ENCODE measurements at regions of chr15 and their contacts with region 1.

Region 1: DNA sequence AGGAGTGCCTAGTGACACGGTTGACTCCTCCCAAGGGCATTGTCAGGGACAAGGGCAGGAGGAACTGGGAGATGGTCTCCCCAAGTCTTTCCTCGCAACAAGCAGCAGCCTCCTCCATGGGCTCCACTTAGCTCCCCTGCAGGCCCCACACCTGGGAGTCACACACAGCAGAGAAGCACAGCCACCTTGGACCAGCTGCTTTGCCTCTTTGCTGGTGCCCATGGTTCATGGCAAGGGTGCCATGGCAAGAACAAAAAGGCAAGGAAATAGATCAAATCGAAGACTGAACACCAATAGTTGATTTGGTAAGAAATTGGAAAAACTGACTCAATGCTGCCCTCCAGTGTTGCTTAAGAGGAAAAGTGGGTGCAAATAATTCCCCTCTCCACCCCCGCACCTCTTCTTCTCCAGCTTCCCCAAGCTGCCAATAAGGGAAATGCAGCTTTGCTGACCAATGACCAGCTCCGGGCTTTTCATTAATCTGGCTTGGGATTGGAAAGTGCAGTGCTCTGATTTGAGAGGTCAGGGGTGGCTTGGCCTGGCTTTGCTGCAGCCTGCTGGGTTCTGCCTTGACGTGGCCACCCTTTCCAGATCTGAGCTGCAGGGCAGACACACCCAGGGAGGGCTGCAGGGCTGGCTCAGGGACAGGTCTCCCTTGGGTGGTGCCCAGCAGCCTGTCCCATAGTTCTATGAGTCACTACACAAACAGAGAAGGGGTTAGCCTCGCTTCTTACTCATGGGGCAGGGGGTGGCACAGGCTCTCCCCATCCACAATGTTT is 162.0 kb downstream of the KLF13 start:
- DNase-seq: peak; percentile 80
- ATAC-seq: peak; percentile 93
- H3K4me3 ChIP-seq: 0 out of 4 replicates have a peak overlapping the region, but pooled peaks of 1 of the 2 experiments have one; percentile 9
- H3K27ac ChIP-seq: peak overlapping the region; percentile 47; the same call in 1 of the 2 replicates
- H3K4me1 ChIP-seq: peaks cover 19 to 21% of the 10 kb centered on the region in 2 experiments
- H3K27me3 ChIP-seq: no peaks in the 10 kb centered on the region
- CTCF ChIP-seq: peak; percentile 78 to 90 (median 84)
- POLR2A ChIP-seq: no peak
- RAD21 ChIP-seq: peak; percentile 77

Region 2: GRCh38 chr15:30903497-30904201 is 585.0 kb before region 1 on chr15 and contains the start of gene FAN1:
- CTCF ChIA-PET with region 1: no interaction called
- POLR2A ChIA-PET with region 1: no interaction called
- RAD21 ChIA-PET with region 1: no interaction called
- intact Hi-C with region 1: loop called (anchors 5 kb)
- DNase-seq: peak; percentile 80
- ATAC-seq: peak; percentile 97
- H3K4me3 ChIP-seq: peak within 1 kb of the TSS; percentile 56 to 65
- H3K27ac ChIP-seq: peak within 1 kb of the TSS; percentile 65
- H3K4me1 ChIP-seq: peaks cover 5 to 16% of the 10 kb centered on the region in 2 experiments; a peak in 3 of 4 replicates
- H3K27me3 ChIP-seq: no peaks in the 10 kb centered on the region
- CTCF ChIP-seq: no peak
- POLR2A ChIP-seq: peak; percentile 85
- RAD21 ChIP-seq: no peak
- total RNA-seq, gene FAN1: 17.4 TPM

Region 3: GRCh38 chr15:31215490-31216214 is 273.0 kb before region 1 on chr15:
- CTCF ChIA-PET with region 1: interaction called, 30 read pairs
- POLR2A ChIA-PET with region 1: no interaction called
- RAD21 ChIA-PET with region 1: interaction called, 5 to 6 read pairs
- intact Hi-C with region 1: loop called (anchors 1 kb)
- DNase-seq: no peak
- ATAC-seq: peak; percentile 89
- H3K4me3 ChIP-seq: peak overlapping the region; percentile 51 to 63
- H3K27ac ChIP-seq: peak overlapping the region; percentile 92
- H3K4me1 ChIP-seq: peaks cover 9 to 19% of the 10 kb centered on the region in 2 experiments; a peak in 3 of 4 replicates
- H3K27me3 ChIP-seq: no peaks in the 10 kb centered on the region
- CTCF ChIP-seq: peak; percentile 62 to 82 (median 76)
- POLR2A ChIP-seq: no peak
- RAD21 ChIP-seq: peak; percentile 63

Region 4: DNA sequence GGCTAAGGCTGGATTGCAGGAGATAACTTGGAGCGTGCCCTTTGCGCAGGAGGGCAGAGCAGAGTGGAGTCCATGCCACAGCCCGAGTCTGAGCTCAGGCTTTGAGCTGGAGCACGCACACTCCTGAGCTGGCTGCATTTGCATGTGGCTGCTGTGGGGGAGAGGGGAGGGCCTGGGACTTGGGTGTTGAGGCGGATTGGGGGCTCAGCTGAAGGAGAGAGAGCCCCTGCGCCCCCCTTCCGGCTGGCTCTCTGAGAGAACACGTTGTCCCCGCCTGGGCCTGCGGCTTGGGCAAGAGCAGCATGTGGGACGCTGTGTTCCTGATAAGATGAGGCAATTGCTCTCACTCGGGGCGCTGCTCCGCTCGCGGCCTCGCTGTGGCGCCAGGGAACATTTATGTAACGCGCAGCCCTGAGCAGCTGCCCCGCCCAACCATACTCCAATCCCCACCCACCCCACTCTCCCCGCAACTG is 122.9 kb before region 1 on chr15:
- CTCF ChIA-PET with region 1: no interaction called
- POLR2A ChIA-PET with region 1: no interaction called
- RAD21 ChIA-PET with region 1: no interaction called
- intact Hi-C with region 1: loop called (anchors 10 kb)
- DNase-seq: no peak
- ATAC-seq: peak; percentile 71
- H3K4me3 ChIP-seq: no peak overlapping the region
- H3K27ac ChIP-seq: no peak overlapping the region
- H3K4me1 ChIP-seq: peaks cover 3 to 7% of the 10 kb centered on the region in 2 experiments; a peak in 2 of 4 replicates
- H3K27me3 ChIP-seq: no peaks in the 10 kb centered on the region
- CTCF ChIP-seq: no peak
- POLR2A ChIP-seq: no peak
- RAD21 ChIP-seq: no peak

Region 5: DNA sequence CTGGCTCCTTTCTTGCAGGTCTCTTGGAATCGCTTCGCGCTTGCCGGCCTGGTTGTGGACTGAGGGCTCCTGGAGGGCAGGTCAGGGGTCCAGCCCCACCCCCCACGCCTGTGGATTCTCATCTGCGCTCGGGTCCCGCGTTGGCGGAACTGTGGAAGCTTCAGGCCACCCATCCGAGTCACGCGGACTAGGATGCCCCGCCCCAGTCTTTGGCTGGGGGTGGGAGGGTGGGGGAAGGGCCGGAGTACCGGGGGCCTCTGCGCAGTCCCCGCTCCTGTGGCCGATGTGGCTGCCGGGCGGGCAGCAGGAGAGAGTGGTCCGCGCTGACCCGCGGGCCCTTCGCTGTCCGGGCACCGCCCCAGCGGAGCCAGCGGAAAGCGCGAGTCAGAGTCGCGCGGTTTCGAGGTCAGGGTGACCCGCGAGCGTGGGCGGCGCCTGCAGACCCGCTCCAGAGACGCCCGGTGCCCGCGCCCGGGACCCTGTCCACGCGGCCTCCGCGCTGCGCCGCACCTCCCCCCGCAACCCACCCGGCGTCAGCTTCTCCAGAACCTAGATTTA is 47.8 kb before region 1 on chr15:
- CTCF ChIA-PET with region 1: interaction called, 35 read pairs
- POLR2A ChIA-PET with region 1: no interaction called
- RAD21 ChIA-PET with region 1: interaction called, 4 to 7 read pairs
- intact Hi-C with region 1: loop called (anchors 1 kb)
- DNase-seq: no peak
- ATAC-seq: no peak
- H3K4me3 ChIP-seq: no peak overlapping the region
- H3K27ac ChIP-seq: no peak overlapping the region
- H3K4me1 ChIP-seq: peaks cover 5 to 14% of the 10 kb centered on the region in 2 experiments
- H3K27me3 ChIP-seq: no peaks in the 10 kb centered on the region
- CTCF ChIP-seq: no peak
- POLR2A ChIP-seq: no peak
- RAD21 ChIP-seq: no peak

Region 6: DNA sequence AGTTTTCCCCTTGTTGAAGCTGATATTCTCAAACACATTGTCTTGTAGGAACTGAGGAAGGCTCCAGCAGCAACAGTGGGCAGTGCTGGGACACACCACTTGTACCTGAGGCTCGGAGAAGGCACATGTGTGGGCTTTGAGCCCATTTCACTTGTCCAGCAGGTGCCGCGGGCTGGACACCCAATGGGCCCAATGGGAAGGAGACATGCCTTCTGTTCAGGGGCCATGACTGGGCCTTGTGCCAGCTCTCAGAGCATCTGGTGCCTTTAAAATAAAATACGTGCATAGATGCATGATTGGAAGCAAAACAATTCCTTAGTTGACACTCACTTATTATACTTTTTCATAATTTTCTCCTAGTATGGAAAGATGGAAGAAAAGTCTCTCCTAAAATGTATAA is 172.2 kb after region 1 on chr15:
- CTCF ChIA-PET with region 1: no interaction called
- POLR2A ChIA-PET with region 1: no interaction called
- RAD21 ChIA-PET with region 1: no interaction called
- intact Hi-C with region 1: no loop called
- DNase-seq: no peak
- ATAC-seq: no peak
- H3K4me3 ChIP-seq: no peak overlapping the region
- H3K27ac ChIP-seq: no peak overlapping the region
- H3K4me1 ChIP-seq: no peaks in the 10 kb centered on the region
- H3K27me3 ChIP-seq: no peaks in the 10 kb centered on the region
- CTCF ChIP-seq: no peak
- POLR2A ChIP-seq: no peak
- RAD21 ChIP-seq: no peak